ENCODE measurements at regions of chr10 and their contacts with region 1.

Region 1: GRCh38 chr10:6348096-6348874 is 145.6 kb downstream of the PFKFB3 start:
- DNase-seq: peak; percentile 91
- H3K4me3 Mint-ChIP-seq: peak overlapping the region; percentile 78
- H3K27ac Mint-ChIP-seq: peak overlapping the region; percentile 92
- H3K4me1 Mint-ChIP-seq: peaks cover 46% of the 10 kb centered on the region
- H3K27me3 Mint-ChIP-seq: no peaks in the 10 kb centered on the region

Region 2: GRCh38 chr10:6239213-6239991 is 108.9 kb before region 1 on chr10:
- intact Hi-C with region 1: loop called (anchors 1 kb)
- DNase-seq: peak; percentile 87
- H3K4me3 Mint-ChIP-seq: no peak overlapping the region
- H3K27ac Mint-ChIP-seq: peak overlapping the region; percentile 16
- H3K4me1 Mint-ChIP-seq: peaks cover 34% of the 10 kb centered on the region
- H3K27me3 Mint-ChIP-seq: no peaks in the 10 kb centered on the region

Region 3: DNA sequence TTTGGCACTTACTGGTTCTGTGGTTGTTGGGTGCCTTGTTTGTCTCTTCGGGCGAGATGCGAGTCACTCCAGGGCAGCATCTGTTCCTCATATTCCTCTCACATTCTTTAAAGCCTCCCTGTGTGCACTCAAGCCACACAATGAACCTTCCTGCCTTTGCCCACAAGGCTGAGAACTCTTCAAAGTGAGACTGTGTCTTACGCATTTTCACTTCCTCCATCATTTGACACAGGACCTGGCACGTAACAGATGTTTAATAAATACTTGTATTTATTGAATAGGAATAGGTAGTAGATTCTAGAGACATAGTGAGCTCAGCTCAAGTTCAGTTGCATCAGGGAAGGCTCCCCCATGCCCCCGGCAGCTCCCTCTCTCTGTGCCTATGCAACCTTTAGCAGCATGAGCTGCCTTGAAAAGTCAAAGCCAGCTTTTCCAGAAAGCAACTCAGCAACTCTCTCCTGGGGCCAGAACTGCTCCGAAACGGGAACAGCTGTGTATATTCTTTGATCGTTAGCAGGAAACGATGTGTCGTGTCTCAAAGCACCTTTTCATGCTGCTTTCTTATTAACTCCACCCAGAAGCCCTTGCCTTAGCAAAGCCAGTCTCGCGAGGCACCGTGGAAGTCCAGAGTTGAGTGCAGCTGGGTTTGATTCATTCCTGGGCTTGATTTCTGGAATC is 48.0 kb before region 1 on chr10:
- intact Hi-C with region 1: loop called (anchors 1 kb)
- DNase-seq: peak; percentile 78
- H3K4me3 Mint-ChIP-seq: peak overlapping the region; percentile 73
- H3K27ac Mint-ChIP-seq: peak overlapping the region; percentile 94
- H3K4me1 Mint-ChIP-seq: peaks cover 47% of the 10 kb centered on the region
- H3K27me3 Mint-ChIP-seq: no peaks in the 10 kb centered on the region

Region 4: GRCh38 chr10:6401562-6402348 is 53.5 kb after region 1 on chr10:
- intact Hi-C with region 1: loop called (anchors 1 kb)
- DNase-seq: peak; percentile 90
- H3K4me3 Mint-ChIP-seq: peak overlapping the region; percentile 24
- H3K27ac Mint-ChIP-seq: peak overlapping the region; percentile 16
- H3K4me1 Mint-ChIP-seq: peaks cover 27% of the 10 kb centered on the region
- H3K27me3 Mint-ChIP-seq: peaks cover 3% of the 10 kb centered on the region

Measured in activated CD4-positive, alpha-beta T cell treated with anti-CD3 and anti-CD28 coated beads, Interleukin-2, amount 10 ng/mL, durations not matched to agents 24 days and 14 days (primary cell).